ENCODE measurements at regions of chr11 and their contacts with region 1.

Region 1: DNA sequence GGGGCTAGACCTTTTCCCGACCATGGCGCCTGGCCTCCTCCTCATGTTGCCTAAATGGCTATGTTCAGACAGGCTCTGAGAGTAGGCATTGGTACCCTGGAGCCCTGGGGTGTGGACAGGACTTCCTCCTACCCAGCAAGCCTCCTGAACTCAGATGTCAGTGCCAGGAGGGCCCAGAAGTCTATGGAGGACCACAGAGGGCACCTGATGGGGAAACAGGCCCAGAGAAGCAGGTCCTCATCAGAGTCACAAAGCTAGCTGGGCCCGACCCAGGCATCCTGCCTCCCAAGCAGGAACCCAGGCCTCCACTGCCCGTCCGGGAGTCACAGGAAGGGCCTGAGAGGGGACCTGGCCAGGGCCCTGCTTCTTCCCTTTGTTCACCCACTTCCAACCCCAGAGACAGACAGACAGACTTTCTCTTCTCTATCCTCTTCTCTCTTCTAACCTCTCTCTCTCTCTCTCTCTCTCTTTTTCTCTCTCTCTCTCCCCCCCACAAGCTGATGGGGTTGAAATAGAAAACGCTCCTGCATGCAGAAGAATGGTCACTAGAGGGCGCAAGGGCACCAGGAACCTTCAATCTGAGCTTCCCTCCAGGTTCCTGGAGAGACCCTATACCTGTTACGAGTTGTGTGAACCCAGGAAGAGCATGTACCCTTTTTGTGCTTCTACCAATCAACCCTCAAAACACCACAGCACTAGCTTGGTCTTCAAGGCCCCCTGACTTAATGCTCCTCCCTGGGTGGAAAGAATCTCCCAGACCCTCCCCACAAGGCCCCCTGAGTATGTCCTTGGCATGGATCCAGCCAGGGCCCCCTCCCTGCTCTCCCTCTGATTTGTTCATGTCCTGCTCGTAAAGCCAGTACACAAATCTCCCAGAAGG is 27.1 kb downstream of the ARAP1 start:
- DNase-seq: no peak
- H3K4me3 ChIP-seq: no peak overlapping the region
- H3K27ac ChIP-seq: peak overlapping the region in 3 of 4 donors; percentile 3 to 92 (median 48)
- H3K4me1 ChIP-seq: peaks cover 22 to 57% (median 35%) of the 10 kb centered on the region in 3 donors
- H3K27me3 ChIP-seq: no peaks in the 10 kb centered on the region
- CTCF ChIP-seq: peak; percentile 85 to 95 (median 91)
- POLR2A ChIP-seq: no peak

Region 2: DNA sequence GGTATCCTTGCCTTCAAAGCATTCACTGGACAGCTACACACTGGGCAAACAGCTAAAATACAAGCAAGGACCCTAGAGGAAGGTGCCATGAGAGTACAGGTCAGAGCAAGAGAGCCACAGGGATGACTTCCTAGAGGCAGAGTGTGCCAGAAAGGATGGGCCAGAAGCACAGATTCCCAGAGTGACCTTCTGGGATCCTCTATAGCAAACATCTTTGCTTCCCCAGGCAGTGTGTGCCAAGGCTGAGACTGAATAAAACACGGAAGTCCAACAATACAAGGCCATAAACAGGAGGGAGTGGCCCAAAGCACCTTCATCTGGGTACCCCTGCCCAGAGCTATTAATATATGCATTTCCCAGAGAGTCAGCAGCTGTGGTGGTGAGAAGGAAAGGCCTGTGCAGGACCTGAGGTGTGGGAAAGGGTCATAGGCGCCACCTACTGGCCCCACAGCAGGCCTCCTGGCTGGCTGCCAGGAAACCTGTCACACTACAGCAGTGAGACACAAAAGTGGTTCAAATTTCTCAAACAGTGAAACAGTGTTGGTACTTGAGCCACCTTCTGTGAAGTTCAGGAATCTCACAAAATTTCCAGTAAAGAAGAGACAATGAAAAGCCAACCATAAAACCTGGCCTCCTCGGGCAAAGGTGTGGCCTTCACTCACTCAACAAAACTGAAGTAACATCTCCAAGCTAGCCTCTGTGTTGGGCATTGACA is 311.0 kb before region 1 on chr11:
- intact Hi-C with region 1: no loop called
- DNase-seq: peak; percentile 17
- H3K4me3 ChIP-seq: no peak overlapping the region
- H3K27ac ChIP-seq: no peak overlapping the region
- H3K4me1 ChIP-seq: peaks cover 3 to 12% (median 4%) of the 10 kb centered on the region in 3 donors
- H3K27me3 ChIP-seq: no peaks in the 10 kb centered on the region
- CTCF ChIP-seq: peak; percentile 56 to 88 (median 82)
- POLR2A ChIP-seq: no peak

Region 3: DNA sequence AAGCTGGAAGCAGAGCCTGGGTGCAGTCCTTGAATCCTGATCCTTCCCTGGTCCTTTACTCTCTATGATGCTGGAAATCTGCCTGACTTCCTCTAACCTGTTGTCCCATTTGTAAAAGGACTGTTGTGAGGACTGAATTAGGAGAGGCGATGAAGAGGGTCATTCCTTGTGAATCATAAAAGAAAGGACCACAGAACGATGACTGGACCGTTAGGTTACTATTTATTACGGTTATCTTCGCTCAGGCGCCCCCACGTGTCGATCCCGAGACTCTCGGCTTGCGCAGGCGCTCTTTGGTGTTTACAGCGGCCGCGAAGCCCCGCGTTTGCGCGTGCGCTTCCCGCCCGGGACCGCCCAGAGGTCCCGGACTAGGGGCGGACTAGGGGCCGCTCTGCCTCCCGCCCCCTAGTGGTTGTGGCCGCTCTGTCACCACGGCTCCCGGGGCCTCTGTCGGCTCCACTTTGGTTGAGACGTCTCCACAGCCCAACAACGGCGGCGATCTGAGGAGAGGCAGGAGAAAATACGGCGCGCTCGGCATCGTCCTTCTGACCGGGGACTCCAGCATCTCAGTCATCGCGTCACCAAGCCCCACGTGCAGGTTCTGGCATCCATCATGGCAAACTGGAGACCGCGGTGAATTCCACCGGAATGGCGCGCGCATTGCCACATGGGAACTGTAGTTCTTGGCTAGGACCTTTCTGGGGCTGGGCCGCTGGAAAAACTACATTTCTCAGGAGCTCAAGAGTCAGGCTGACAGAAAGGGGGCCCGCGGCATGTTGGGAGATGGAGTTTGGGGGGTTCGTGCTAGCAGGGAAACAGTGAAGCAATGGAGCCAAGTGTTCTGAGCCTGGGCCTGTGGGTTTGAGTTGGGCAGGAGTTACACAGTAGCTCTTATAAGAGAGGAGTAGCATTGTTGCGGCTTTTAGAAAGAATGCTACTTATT is 68.6 kb after region 1 on chr11 and contains the start of gene STARD10:
- intact Hi-C with region 1: loop called (anchors 5 kb)
- DNase-seq: peak; percentile 58
- H3K4me3 ChIP-seq: peak within 1 kb of the TSS; percentile 42 to 73 (median 64)
- H3K27ac ChIP-seq: peak within 1 kb of the TSS; percentile 83 to 95 (median 93)
- H3K4me1 ChIP-seq: peaks cover 14 to 27% (median 24%) of the 10 kb centered on the region in 3 donors
- H3K27me3 ChIP-seq: no peaks in the 10 kb centered on the region
- CTCF ChIP-seq: peak; percentile 94 to 100 (median 100)
- POLR2A ChIP-seq: peak in 3 of 4 donors; percentile 8 to 28 (median 16)
- total RNA-seq, gene STARD10: 42.2 to 83.1 (median 49.4) TPM